Stomach (tissue), 19 donors: ENCODE measurements at regions of chr20 and their contacts with region 1.

Region 1: GRCh38 chr20:38645980-38646858 is 44.6 kb downstream of the ARHGAP40 start:
- DNase-seq: peak; percentile 83 to 91
- H3K4me3 ChIP-seq: peak overlapping the region; percentile 15 to 27 (median 25)
- H3K27ac ChIP-seq: no peak overlapping the region
- H3K4me1 ChIP-seq: peaks cover 7 to 12% (median 10%) of the 10 kb centered on the region in 4 donors
- H3K27me3 ChIP-seq: peaks cover 0 to 92% (median 24%) of the 10 kb centered on the region in 3 donors
- CTCF ChIP-seq: peak in 6 of 7 experiments; percentile 48 to 94 (median 89)
- EP300 ChIP-seq: no peak
- POLR2A ChIP-seq: no peak

Region 2: GRCh38 chr20:38748097-38748860 is 102.1 kb after region 1 on chr20 and contains the start of gene ACTR5:
- intact Hi-C with region 1: loop called (anchors 5 kb)
- DNase-seq: peak; percentile 95 to 97
- H3K4me3 ChIP-seq: peak within 1 kb of the TSS; percentile 81 to 94 (median 92)
- H3K27ac ChIP-seq: peak within 1 kb of the TSS; percentile 87 to 94 (median 90)
- H3K4me1 ChIP-seq: peaks cover 0 to 36% (median 20%) of the 10 kb centered on the region in 4 donors
- H3K27me3 ChIP-seq: peaks cover 0 to 6% (median 0%) of the 10 kb centered on the region in 3 donors
- CTCF ChIP-seq: no peak
- EP300 ChIP-seq: no peak
- POLR2A ChIP-seq: no peak
- total RNA-seq, gene ACTR5: 3.6 to 68.1 (median 8.4) TPM